ENCODE measurements at regions of chr10 and their contacts with region 1.

Region 1: DNA sequence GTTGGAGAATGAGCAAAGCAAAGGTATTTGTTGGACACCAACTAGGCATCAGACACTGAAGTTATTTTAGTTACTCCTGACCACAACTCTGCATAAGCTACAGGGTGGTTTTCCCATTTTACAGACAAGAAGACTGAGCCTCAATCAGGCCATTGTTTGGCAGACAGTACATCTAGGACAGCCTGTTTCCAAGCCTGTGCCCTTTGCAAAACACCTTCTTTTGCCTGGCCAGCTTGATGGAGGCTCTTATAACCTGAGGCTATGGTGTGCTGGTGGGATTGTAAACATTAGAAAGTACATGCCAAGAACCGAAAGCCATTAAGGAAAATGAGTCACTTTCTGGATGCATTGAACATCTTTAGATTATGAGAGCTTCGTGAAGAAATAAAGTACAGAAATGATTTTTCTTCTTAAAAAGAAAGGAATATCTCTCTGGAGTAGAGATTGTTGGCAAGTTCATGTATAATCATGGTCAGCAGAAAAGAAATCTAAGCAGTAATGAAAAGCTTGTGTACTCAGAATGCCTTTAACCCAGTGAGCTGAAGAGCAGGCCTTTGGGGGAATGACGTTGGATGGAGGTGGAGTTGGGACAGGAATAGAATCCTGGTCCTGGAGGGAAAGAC is 140.6 kb downstream of the KIAA1217 start:
- DNase-seq: no peak
- H3K4me3 ChIP-seq: no peak overlapping the region
- H3K27ac ChIP-seq: peak overlapping the region in 1 of 4 donors; percentile 6
- H3K4me1 ChIP-seq: peaks cover 0 to 20% (median under 1%) of the 10 kb centered on the region in 4 donors
- H3K27me3 ChIP-seq: no peaks in the 10 kb centered on the region
- CTCF ChIP-seq: no peak
- EP300 ChIP-seq: no peak
- POLR2A ChIP-seq: no peak

Region 2: DNA sequence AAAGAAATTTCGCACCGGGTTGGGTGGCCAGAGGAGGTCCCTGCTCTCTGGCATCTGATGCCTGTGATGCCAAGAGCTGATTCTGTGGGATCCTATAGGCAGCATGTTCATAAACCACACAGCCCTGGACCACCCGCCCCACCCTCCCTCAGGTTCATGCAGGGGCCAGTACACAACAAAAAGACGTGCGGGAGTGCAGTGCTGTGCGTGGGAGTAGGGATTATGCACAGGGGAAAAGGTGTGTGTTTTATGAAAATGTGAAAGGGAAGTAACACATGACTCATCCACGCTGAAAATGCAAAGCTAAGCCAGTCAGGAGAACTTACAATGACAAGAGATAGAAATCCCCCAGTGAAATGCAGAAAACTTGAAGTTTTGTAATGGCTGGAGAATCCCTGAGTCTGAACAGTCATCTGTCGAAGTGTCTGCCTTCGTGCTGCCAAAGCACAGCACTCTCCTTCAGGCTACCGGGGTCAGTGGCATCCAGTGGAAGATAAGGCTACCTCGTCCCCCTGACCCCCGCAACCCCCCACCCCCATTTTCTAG is 139.5 kb before region 1 on chr10:
- intact Hi-C with region 1: loop called (anchors 10 kb)
- DNase-seq: no peak
- H3K4me3 ChIP-seq: peak overlapping the region; percentile 35 to 58 (median 57)
- H3K27ac ChIP-seq: peak overlapping the region; percentile 83 to 89 (median 87)
- H3K4me1 ChIP-seq: peaks cover 0 to 30% (median 25%) of the 10 kb centered on the region in 4 donors
- H3K27me3 ChIP-seq: no peaks in the 10 kb centered on the region
- CTCF ChIP-seq: no peak
- EP300 ChIP-seq: no peak
- POLR2A ChIP-seq: no peak

Region 3: DNA sequence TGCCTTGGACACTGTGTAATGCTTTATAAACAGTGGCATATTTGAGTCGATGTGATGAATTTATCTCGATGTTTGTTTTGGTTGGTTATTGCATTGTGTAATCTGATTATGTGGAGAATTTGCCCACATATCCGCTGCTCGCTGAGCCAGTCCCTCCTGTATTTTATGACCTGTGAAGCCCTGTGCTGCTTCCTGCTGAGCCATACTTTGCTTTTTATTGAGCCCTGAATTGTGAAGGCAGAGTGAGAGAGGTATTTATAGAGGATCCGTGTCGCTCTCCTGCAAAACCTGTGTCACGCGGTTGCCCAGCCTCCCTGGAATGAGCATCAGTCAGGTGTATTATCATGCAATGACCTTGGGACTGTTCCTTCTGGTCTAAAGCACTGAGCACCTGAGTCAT is 120.5 kb after region 1 on chr10:
- intact Hi-C with region 1: no loop called
- DNase-seq: no peak
- H3K4me3 ChIP-seq: no peak overlapping the region
- H3K27ac ChIP-seq: no peak overlapping the region
- H3K4me1 ChIP-seq: peaks cover 0 to 13% (median 10%) of the 10 kb centered on the region in 4 donors
- H3K27me3 ChIP-seq: no peaks in the 10 kb centered on the region
- CTCF ChIP-seq: no peak
- EP300 ChIP-seq: no peak
- POLR2A ChIP-seq: peak in 1 of 2 donors; percentile 11